Aorta (tissue), 5 donors: ENCODE measurements at regions of chr5 and their contacts with region 1.

Region 1: GRCh38 chr5:40477856-40478546 is 201.7 kb upstream of the PTGER4 start:
- DNase-seq: no peak
- ATAC-seq: no peak
- H3K4me3 ChIP-seq: no peak overlapping the region
- H3K27ac ChIP-seq: peak overlapping the region in 1 of 2 donors; percentile 57
- H3K4me1 ChIP-seq: peaks cover 0 to 4% of the 10 kb centered on the region in 2 donors
- H3K27me3 ChIP-seq: no peaks in the 10 kb centered on the region

Region 2: DNA sequence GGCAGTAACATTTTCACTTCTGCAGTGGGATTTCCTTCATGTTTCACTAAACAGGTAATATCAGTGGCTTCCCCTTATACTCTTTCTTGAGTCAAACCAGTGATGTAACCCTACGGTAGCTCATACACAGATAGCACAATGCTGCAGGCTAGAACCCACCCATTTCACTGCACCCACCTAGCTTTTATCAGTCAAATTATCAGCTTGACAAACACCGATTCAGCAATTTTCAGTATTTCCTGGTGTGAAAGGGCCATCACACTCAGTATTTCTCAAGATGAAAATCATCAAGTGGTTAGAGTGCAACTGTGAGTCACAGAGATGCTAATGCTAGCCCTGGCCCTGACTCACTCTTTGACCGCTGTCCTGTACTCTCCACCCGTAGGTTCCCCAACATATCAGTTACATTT is 40.5 kb before region 1 on chr5:
- intact Hi-C with region 1: no loop called
- DNase-seq: no peak
- ATAC-seq: no peak
- H3K4me3 ChIP-seq: no peak overlapping the region
- H3K27ac ChIP-seq: no peak overlapping the region
- H3K4me1 ChIP-seq: no peaks in the 10 kb centered on the region
- H3K27me3 ChIP-seq: no peaks in the 10 kb centered on the region

Region 3: GRCh38 chr5:40507095-40507494 is 29.1 kb after region 1 on chr5:
- intact Hi-C with region 1: no loop called
- DNase-seq: no peak
- ATAC-seq: no peak
- H3K4me3 ChIP-seq: no peak overlapping the region
- H3K27ac ChIP-seq: no peak overlapping the region
- H3K4me1 ChIP-seq: no peaks in the 10 kb centered on the region
- H3K27me3 ChIP-seq: no peaks in the 10 kb centered on the region

Region 4: DNA sequence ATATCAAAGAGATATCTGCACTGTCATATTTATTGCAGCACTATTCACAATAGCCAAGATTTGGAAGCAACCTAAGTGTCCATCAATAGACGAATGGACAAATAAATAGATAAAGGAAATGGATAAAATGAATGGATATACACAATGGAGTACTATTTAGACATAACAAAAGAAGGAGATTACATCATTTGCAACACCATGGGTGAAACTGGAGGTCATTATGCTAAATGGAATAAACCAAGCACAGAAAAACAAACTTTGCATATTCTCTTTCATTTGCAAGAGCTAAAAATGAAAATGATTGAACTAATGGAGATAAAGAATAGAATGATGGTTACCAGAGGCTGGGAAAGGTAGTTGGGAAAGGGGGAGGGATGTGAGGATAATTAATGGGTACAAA is 46.7 kb after region 1 on chr5:
- intact Hi-C with region 1: no loop called
- DNase-seq: no peak
- ATAC-seq: no peak
- H3K4me3 ChIP-seq: no peak overlapping the region
- H3K27ac ChIP-seq: no peak overlapping the region
- H3K4me1 ChIP-seq: no peaks in the 10 kb centered on the region
- H3K27me3 ChIP-seq: no peaks in the 10 kb centered on the region

Region 5: DNA sequence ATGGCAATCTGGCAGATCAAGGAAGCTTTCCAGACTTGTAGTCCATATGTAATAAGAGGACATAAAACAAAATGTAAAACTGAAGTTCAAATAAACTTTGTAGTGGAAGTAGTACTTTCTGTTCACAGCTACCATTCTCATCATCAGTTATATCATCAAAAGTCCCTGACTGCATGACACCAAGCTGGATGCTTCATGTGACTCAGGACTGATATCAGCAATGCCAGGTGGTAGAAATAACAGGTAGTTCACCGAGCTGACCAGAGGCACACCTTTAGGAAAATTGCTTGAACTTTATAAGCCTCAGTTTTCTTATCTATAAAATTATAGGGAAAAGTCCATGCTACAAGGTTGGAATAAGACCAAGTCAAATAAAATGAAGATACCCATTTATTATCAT is 76.8 kb after region 1 on chr5:
- intact Hi-C with region 1: loop called in 1 of 2 experiments (anchors 2 kb)
- DNase-seq: no peak
- ATAC-seq: no peak
- H3K4me3 ChIP-seq: no peak overlapping the region
- H3K27ac ChIP-seq: no peak overlapping the region
- H3K4me1 ChIP-seq: no peaks in the 10 kb centered on the region
- H3K27me3 ChIP-seq: no peaks in the 10 kb centered on the region

Region 6: GRCh38 chr5:40578501-40579451 is 100.8 kb after region 1 on chr5:
- intact Hi-C with region 1: no loop called
- DNase-seq: no peak
- ATAC-seq: no peak
- H3K4me3 ChIP-seq: no peak overlapping the region
- H3K27ac ChIP-seq: no peak overlapping the region
- H3K4me1 ChIP-seq: no peaks in the 10 kb centered on the region
- H3K27me3 ChIP-seq: no peaks in the 10 kb centered on the region

Region 7: DNA sequence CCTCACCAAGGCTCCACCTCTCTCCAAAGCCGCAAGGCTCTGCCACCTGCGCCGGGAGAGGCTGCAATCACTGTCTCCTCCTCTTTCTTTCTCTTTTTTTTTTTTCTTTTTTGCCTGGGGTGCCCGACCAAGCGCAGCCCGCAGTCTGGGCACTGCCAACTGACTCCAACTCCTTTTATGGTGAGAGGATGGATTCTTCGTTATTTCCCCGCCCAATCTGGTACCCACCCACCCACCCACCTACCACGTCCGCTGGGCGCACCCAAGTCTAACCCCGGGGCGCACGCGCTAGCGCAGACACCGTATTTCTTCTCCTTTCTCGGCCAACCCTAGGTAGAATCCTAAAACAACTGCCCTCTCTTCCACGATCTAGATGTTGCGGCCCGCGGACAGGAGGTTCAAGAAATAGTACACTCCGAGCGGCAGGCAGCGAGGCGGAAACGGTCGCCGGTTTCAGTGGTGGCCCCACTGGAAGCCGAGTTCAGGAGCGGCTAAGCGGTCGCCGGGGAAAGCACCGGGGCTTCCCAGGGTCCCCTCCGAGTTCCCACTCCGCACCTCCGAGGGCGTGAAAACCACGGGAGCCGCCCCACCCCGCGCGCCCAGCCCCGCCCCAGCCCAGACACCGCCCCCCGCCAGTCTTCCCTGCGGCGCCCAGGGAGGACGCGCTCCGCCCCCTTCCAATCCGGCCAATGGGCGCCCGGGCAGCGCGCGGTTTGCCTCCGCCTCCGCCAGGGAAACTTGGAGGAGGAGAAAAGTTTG is 201.3 kb after region 1 on chr5:
- intact Hi-C with region 1: loop called in 1 of 2 experiments (anchors 5 kb)
- DNase-seq: peak; percentile 96 to 97
- ATAC-seq: peak; percentile 96
- H3K4me3 ChIP-seq: peak overlapping the region; percentile 60 to 93
- H3K27ac ChIP-seq: peak overlapping the region in 1 of 2 donors; percentile 85
- H3K4me1 ChIP-seq: no peaks in the 10 kb centered on the region
- H3K27me3 ChIP-seq: no peaks in the 10 kb centered on the region